ENCODE measurements at regions of chr2 and their contacts with region 1.

Region 1: GRCh38 chr2:48461721-48462120 is 68.2 kb upstream of the STON1 start:
- DNase-seq: no peak
- H3K4me3 Mint-ChIP-seq: no peak overlapping the region
- H3K27ac Mint-ChIP-seq: no peak overlapping the region
- H3K4me1 Mint-ChIP-seq: no peaks in the 10 kb centered on the region
- H3K27me3 Mint-ChIP-seq: no peaks in the 10 kb centered on the region
- CTCF ChIP-seq: no peak

Region 2: GRCh38 chr2:48482313-48482712 is 20.6 kb after region 1 on chr2:
- CTCF ChIA-PET with region 1: interaction called, 12 read pairs
- POLR2A ChIA-PET with region 1: no interaction called
- intact Hi-C with region 1: no loop called
- DNase-seq: peak; percentile 13
- H3K4me3 Mint-ChIP-seq: no peak overlapping the region
- H3K27ac Mint-ChIP-seq: no peak overlapping the region
- H3K4me1 Mint-ChIP-seq: peaks cover 6% of the 10 kb centered on the region
- H3K27me3 Mint-ChIP-seq: no peaks in the 10 kb centered on the region
- CTCF ChIP-seq: no peak

Region 3: DNA sequence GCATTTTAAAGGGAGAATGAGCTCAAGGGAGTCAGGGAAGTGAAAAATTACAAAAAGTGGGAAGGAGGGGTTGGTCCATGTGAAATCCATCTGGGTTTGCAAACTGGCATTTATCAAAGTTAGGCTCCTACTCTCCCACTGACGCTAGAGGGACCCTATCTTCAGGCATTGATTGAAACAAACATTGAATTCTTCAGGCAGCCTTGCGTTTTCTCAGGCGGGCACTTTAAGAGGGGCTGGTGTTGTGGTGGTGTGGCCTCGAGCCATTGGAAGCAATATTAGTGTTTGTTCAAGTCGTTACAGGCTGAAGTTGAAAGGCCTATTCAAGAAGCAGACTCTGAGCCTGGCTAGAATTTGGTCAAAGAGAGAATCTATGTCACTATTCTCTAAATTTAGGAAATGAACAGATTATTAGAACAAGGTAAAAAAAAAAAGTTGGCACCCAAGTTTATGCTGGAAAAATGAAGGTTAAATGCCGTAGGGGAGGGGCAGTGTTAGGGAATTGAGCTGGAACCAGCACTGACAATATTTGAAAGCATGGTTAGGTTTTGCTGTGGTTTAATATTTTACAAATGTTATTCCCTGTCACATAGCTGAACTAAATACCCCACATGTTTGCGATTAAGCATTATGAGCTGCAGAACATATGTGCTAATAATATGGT is 105.0 kb after region 1 on chr2:
- CTCF ChIA-PET with region 1: no interaction called
- POLR2A ChIA-PET with region 1: no interaction called
- intact Hi-C with region 1: no loop called
- DNase-seq: no peak
- H3K4me3 Mint-ChIP-seq: no peak overlapping the region
- H3K27ac Mint-ChIP-seq: no peak overlapping the region
- H3K4me1 Mint-ChIP-seq: no peaks in the 10 kb centered on the region
- H3K27me3 Mint-ChIP-seq: no peaks in the 10 kb centered on the region
- CTCF ChIP-seq: no peak